Psoas muscle (tissue), 8 donors: ENCODE measurements at regions of chr1 and their contacts with region 1.

Region 1: GRCh38 chr1:9110669-9111356 is 18.1 kb downstream of the GPR157 start:
- DNase-seq: peak; percentile 91 to 94
- ATAC-seq: peak; percentile 66 to 81 (median 76)
- H3K4me3 ChIP-seq: no peak overlapping the region
- H3K27ac ChIP-seq: no peak overlapping the region
- H3K4me1 ChIP-seq: peaks cover 10% of the 10 kb centered on the region
- H3K27me3 ChIP-seq: no peaks in the 10 kb centered on the region
- CTCF ChIP-seq: peak; percentile 92

Region 2: GRCh38 chr1:9196129-9197040 is 85.6 kb after region 1 on chr1:
- intact Hi-C with region 1: loop called (anchors 1 to 2 kb)
- DNase-seq: peak; percentile 72 to 80
- ATAC-seq: peak; percentile 58 to 79 (median 64)
- H3K4me3 ChIP-seq: peak overlapping the region; percentile 40
- H3K27ac ChIP-seq: peak overlapping the region; percentile 42
- H3K4me1 ChIP-seq: peaks cover 26% of the 10 kb centered on the region
- H3K27me3 ChIP-seq: peaks cover 0 to 20% (median 1%) of the 10 kb centered on the region in 3 donors
- CTCF ChIP-seq: peak; percentile 80

Region 3: GRCh38 chr1:9486466-9487140 is 375.8 kb after region 1 on chr1:
- intact Hi-C with region 1: loop called in 1 of 2 experiments (anchors 5 kb)
- DNase-seq: no peak
- ATAC-seq: no peak
- H3K4me3 ChIP-seq: no peak overlapping the region
- H3K27ac ChIP-seq: no peak overlapping the region
- H3K4me1 ChIP-seq: no peaks in the 10 kb centered on the region
- H3K27me3 ChIP-seq: no peaks in the 10 kb centered on the region
- CTCF ChIP-seq: no peak